Mammary epithelial cell (primary cell): ENCODE measurements at regions of chr6 and their contacts with region 1.

Region 1: DNA sequence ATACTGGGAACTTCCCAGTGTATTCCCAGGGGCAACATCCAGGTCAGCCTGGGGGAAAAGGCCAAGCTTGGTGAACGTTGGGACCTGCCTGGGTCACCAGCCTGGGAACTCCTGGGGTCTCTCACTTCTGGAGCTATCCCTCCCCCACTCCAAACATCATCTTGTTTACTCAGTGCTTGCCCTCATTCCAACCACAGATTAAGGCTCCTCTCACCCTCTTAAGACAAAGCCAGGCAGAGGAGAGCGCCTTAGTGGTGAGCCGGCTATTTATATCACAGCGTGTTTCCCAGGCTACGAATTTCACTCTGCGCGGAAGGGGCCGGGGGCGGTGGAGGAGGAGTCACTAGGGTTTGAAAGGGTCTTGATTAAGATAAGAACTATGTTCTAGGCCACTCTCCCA is 12.1 kb downstream of the PRPH2 start:
- DNase-seq: no peak
- H3K4me3 ChIP-seq: no peak overlapping the region
- H3K27ac ChIP-seq: no peak overlapping the region
- H3K4me1 ChIP-seq: peaks cover 3% of the 10 kb centered on the region
- H3K27me3 ChIP-seq: no peaks in the 10 kb centered on the region
- CTCF ChIP-seq: no peak

Region 2: GRCh38 chr6:42661540-42662153 is 48.7 kb before region 1 on chr6:
- CTCF ChIA-PET with region 1: no interaction called
- dilution Hi-C with region 1: loop called (anchors 5 kb)
- in situ Hi-C with region 1: no loop called
- intact Hi-C with region 1: no loop called
- DNase-seq: peak; percentile 51
- H3K4me3 ChIP-seq: no peak overlapping the region
- H3K27ac ChIP-seq: no peak overlapping the region
- H3K4me1 ChIP-seq: no peaks in the 10 kb centered on the region
- H3K27me3 ChIP-seq: no peaks in the 10 kb centered on the region
- CTCF ChIP-seq: peak; percentile 76 to 86

Region 3: DNA sequence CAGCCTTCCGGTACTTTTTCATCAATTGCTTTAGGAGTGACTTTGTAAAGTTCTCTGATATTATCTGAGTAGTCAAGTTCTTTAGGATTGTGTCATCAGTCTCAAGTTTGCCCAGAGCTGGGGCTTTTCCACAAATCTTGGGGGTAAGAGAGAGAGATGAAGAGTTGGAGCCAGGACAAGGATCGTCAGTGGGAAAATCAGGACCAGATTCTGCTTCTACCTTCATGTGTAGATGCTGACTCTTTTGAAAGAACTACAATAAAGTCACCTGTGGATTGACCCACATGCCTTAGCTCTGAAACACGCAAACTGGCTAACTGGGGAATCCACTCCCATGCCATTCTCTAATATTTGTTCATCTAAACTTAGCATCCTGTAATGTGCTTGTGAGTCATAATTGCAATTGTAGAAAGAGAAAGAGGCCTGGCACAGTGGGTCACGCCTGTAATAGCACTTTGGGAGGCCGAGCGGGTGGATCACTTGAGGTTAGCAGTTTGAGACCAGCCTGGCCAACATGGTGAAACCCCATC is 55.9 kb after region 1 on chr6:
- CTCF ChIA-PET with region 1: no interaction called
- dilution Hi-C with region 1: loop called (anchors 5 kb)
- in situ Hi-C with region 1: no loop called
- intact Hi-C with region 1: no loop called
- DNase-seq: peak; percentile 76
- H3K4me3 ChIP-seq: no peak overlapping the region
- H3K27ac ChIP-seq: no peak overlapping the region
- H3K4me1 ChIP-seq: no peaks in the 10 kb centered on the region
- H3K27me3 ChIP-seq: no peaks in the 10 kb centered on the region
- CTCF ChIP-seq: no peak